GM12878 (cell line): ENCODE measurements at regions of chr9 and their contacts with region 1.

Region 1: GRCh38 chr9:1273859-1274258 is 223.7 kb downstream of the DMRT2 start:
- DNase-seq: no peak
- ATAC-seq: peak; percentile 71
- H3K4me3 ChIP-seq: no peak overlapping the region
- H3K27ac ChIP-seq: no peak overlapping the region
- H3K4me1 ChIP-seq: no peaks in the 10 kb centered on the region
- H3K27me3 ChIP-seq: no peaks in the 10 kb centered on the region
- CTCF ChIP-seq: no peak
- EP300 ChIP-seq: peak; percentile 21 to 43; a peak in 2 of 4 replicates
- POLR2A ChIP-seq: no peak
- RAD21 ChIP-seq: no peak

Region 2: GRCh38 chr9:1248743-1249142 is 25.1 kb before region 1 on chr9:
- CTCF ChIA-PET with region 1: no interaction called
- POLR2A ChIA-PET with region 1: no interaction called
- RAD21 ChIA-PET with region 1: no interaction called
- SMC1A ChIA-PET with region 1: no interaction called
- in situ Hi-C with region 1: no loop called
- intact Hi-C with region 1: no loop called
- DNase-seq: no peak
- ATAC-seq: no peak
- H3K4me3 ChIP-seq: no peak overlapping the region
- H3K27ac ChIP-seq: no peak overlapping the region
- H3K4me1 ChIP-seq: no peaks in the 10 kb centered on the region
- H3K27me3 ChIP-seq: no peaks in the 10 kb centered on the region
- CTCF ChIP-seq: no peak
- EP300 ChIP-seq: no peak
- POLR2A ChIP-seq: no peak
- RAD21 ChIP-seq: no peak

Region 3: DNA sequence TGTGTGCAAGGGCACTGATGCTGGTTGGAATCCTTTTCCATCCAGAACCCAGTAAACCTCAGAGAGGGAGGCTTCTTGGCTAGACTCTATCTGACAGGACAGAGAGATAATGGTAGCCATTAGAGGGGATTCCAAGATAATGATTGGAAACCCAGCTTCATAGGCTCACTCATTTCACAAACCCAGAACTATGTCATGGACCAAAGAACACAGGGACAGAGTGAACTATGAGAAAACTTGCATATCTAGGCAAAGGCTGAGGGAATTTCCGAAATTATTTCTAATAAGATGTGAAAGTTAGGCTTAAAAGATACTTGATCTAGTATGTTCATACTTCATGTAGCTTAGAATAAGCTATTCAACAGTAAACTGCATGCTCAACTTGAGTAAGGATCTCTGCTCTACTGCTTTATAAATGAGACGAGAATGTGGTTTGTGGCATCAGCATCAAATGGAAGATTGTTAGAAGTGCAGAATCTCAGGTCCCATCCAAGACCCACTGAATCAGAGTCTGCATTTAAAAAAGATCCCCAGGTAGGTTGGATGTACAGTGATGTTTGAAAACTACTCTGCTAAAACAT is 37.7 kb after region 1 on chr9:
- CTCF ChIA-PET with region 1: no interaction called
- POLR2A ChIA-PET with region 1: interaction called, 5 read pairs
- RAD21 ChIA-PET with region 1: interaction called, 7 read pairs
- SMC1A ChIA-PET with region 1: interaction called, 8 read pairs
- in situ Hi-C with region 1: no loop called
- intact Hi-C with region 1: loop called (anchors 5 kb)
- DNase-seq: no peak
- ATAC-seq: peak; percentile 83
- H3K4me3 ChIP-seq: no peak overlapping the region
- H3K27ac ChIP-seq: no peak overlapping the region
- H3K4me1 ChIP-seq: no peaks in the 10 kb centered on the region
- H3K27me3 ChIP-seq: no peaks in the 10 kb centered on the region; a peak in 1 of 4 replicates
- CTCF ChIP-seq: no peak
- EP300 ChIP-seq: no peak
- POLR2A ChIP-seq: no peak
- RAD21 ChIP-seq: no peak

Region 4: DNA sequence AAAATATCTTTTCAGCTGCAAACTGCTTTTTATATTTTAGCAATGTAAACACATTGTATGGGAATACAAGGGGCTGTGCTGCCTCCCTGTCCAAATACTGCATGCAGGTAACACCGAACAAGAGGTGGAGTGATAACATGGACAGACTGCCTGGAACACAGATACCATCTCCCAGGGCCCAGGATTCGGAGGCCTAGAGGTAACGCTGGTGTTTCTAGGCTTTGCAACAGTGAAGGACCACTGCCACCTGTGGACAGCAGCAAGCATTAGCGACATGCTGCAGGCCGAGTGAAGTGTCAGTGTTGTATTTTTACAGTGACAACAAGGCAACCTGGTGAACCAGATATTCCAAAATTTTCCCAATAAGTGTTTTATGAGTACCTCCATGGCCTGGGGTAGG is 155.4 kb after region 1 on chr9:
- CTCF ChIA-PET with region 1: interaction called, 3 read pairs
- POLR2A ChIA-PET with region 1: no interaction called
- RAD21 ChIA-PET with region 1: interaction called, 5 read pairs
- SMC1A ChIA-PET with region 1: interaction called, 5 read pairs
- in situ Hi-C with region 1: no loop called
- intact Hi-C with region 1: loop called (anchors 10 kb)
- DNase-seq: no peak
- ATAC-seq: peak; percentile 77
- H3K4me3 ChIP-seq: no peak overlapping the region
- H3K27ac ChIP-seq: no peak overlapping the region
- H3K4me1 ChIP-seq: no peaks in the 10 kb centered on the region
- H3K27me3 ChIP-seq: no peaks in the 10 kb centered on the region
- CTCF ChIP-seq: peak in 2 of 3 experiments; percentile 5 to 52; a peak in 2 of 6 replicates
- EP300 ChIP-seq: no peak
- POLR2A ChIP-seq: no peak
- RAD21 ChIP-seq: peak; percentile 21; the same call in 1 of the 2 replicates

Region 5: GRCh38 chr9:2234371-2234893 is 960.6 kb after region 1 on chr9:
- CTCF ChIA-PET with region 1: no interaction called
- POLR2A ChIA-PET with region 1: no interaction called
- RAD21 ChIA-PET with region 1: no interaction called
- SMC1A ChIA-PET with region 1: no interaction called
- in situ Hi-C with region 1: no loop called
- intact Hi-C with region 1: no loop called
- DNase-seq: no peak
- ATAC-seq: no peak
- H3K4me3 ChIP-seq: no peak overlapping the region
- H3K27ac ChIP-seq: no peak overlapping the region
- H3K4me1 ChIP-seq: peaks cover 8% of the 10 kb centered on the region
- H3K27me3 ChIP-seq: no peaks in the 10 kb centered on the region; a peak in 1 of 4 replicates
- CTCF ChIP-seq: no peak
- EP300 ChIP-seq: no peak
- POLR2A ChIP-seq: no peak
- RAD21 ChIP-seq: no peak